CD8-positive, alpha-beta T cell (primary cell): ENCODE measurements at regions of chr7 and their contacts with region 1.

Region 1: GRCh38 chr7:17326380-17326779 is 27.9 kb downstream of the AHR start:
- DNase-seq: no peak
- ATAC-seq: no peak
- H3K4me3 ChIP-seq: no peak overlapping the region
- H3K4me3 Mint-ChIP-seq: no peak overlapping the region
- H3K27ac ChIP-seq: no peak overlapping the region
- H3K27ac Mint-ChIP-seq: no peak overlapping the region
- H3K4me1 ChIP-seq: no peaks in the 10 kb centered on the region
- H3K4me1 Mint-ChIP-seq: no peaks in the 10 kb centered on the region
- H3K27me3 ChIP-seq: no peaks in the 10 kb centered on the region
- H3K27me3 Mint-ChIP-seq: no peaks in the 10 kb centered on the region
- CTCF ChIP-seq: no peak

Region 2: DNA sequence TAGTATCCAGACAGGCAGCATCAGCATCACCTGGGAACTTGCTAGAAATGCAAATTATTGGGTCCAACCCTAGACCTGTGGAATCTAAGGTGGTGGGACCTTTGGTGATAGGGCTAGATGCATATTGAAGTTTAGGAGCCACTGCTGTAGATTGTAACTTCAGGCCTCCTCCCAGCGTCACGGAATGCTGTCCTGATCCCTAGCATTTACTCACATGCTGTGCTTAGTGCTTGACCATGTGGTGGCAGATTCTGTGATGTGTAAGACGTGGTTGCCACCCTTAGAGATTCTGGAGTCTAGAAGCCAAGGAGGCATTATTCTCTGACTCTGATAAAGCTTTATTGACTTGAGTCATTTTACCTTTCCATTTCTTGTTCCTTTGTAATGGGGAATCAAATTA is 14.4 kb before region 1 on chr7:
- CTCF ChIA-PET with region 1: no interaction called
- POLR2A ChIA-PET with region 1: no interaction called
- intact Hi-C with region 1: loop called in 1 of 2 experiments (anchors 2 kb)
- DNase-seq: no peak
- ATAC-seq: no peak
- H3K4me3 ChIP-seq: no peak overlapping the region
- H3K4me3 Mint-ChIP-seq: no peak overlapping the region
- H3K27ac ChIP-seq: no peak overlapping the region
- H3K27ac Mint-ChIP-seq: no peak overlapping the region
- H3K4me1 ChIP-seq: no peaks in the 10 kb centered on the region
- H3K4me1 Mint-ChIP-seq: no peaks in the 10 kb centered on the region
- H3K27me3 ChIP-seq: no peaks in the 10 kb centered on the region
- H3K27me3 Mint-ChIP-seq: no peaks in the 10 kb centered on the region
- CTCF ChIP-seq: no peak